Testis (tissue), 5 donors: ENCODE measurements at regions of chr11 and their contacts with region 1.

Region 1: GRCh38 chr11:86938900-86939880 is 16.0 kb downstream of the FZD4 start:
- DNase-seq: no peak
- H3K4me3 ChIP-seq: no peak overlapping the region
- H3K27ac ChIP-seq: peak overlapping the region; percentile 72 to 80
- H3K4me1 ChIP-seq: peaks cover 36% of the 10 kb centered on the region
- H3K27me3 ChIP-seq: no peaks in the 10 kb centered on the region
- CTCF ChIP-seq: peak; percentile 52 to 78 (median 57)
- POLR2A ChIP-seq: no peak

Region 2: DNA sequence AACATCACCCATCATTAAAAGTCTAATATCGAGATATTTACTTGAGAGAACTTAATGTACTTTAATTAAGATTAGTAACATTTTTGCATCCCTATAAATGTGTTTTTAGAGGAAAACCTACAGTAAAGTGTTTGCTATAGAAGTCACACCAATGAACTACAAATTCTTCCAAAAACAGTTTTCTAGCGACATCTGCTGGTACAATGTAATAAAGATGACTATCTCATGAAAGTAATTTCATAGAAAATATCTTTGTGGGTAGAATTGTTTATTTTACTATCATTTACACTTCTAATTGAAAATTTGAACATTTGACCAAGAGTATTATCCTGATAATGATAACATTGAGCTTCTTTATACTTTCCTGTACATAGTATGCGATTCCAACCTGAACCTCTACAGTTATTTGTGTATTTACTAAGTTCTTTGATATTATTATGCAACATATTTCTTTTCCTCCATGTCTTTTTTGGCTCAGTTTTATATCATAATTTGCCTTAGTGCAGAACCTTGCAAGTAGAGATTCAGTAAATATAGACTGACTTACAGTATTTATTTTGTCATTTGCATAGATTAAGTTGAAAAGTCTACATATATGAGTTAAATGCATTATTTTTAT is 351.2 kb after region 1 on chr11:
- intact Hi-C with region 1: loop called (anchors 10 kb)
- DNase-seq: no peak
- H3K4me3 ChIP-seq: no peak overlapping the region
- H3K27ac ChIP-seq: no peak overlapping the region
- H3K4me1 ChIP-seq: no peaks in the 10 kb centered on the region
- H3K27me3 ChIP-seq: no peaks in the 10 kb centered on the region
- CTCF ChIP-seq: peak; percentile 42 to 55 (median 51)
- POLR2A ChIP-seq: no peak